ENCODE measurements at regions of chr4 and their contacts with region 1.

Region 1: DNA sequence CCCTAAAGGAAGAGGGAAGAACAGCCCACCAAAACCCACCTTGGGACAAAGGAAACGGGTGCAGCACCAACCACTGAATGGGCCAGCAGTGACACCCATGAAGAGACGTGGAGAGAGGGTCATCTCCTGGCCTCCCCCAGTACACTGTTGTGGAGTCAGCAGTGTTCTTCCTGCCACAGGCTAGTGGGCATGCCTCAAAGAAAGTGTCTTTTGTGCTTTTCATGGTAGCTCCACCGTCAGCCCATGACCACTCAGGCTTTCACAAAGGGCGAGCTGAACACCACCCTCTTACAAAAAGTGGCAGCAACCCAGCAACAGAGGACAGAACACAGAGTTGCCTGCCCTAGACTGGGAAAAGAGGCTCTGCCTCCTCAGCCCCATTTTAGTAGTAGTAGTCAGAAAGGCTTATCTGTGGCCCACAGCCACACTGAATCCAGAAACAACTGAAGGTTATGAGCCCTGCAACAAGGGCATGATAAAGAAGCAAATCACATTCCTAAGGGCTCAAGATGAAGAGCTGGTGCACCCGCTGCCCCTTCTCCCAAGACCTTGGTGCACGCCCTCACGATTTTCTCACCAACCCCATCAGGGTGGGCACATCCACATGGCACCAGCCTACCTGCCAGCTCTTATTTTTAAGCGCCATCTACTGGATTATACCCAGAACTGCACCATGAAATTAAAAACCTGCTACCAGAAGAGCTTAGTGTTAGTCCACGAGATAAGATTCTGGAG is 53.1 kb downstream of the RAB28 start:
- DNase-seq: no peak
- H3K4me3 Mint-ChIP-seq: no peak overlapping the region
- H3K27ac Mint-ChIP-seq: no peak overlapping the region
- H3K4me1 Mint-ChIP-seq: peaks cover 9% of the 10 kb centered on the region
- H3K27me3 Mint-ChIP-seq: no peaks in the 10 kb centered on the region

Region 2: GRCh38 chr4:13452927-13453579 is 22.1 kb after region 1 on chr4:
- intact Hi-C with region 1: loop called (anchors 2 kb)
- DNase-seq: no peak
- H3K4me3 Mint-ChIP-seq: peak overlapping the region; percentile 59
- H3K27ac Mint-ChIP-seq: peak overlapping the region; percentile 80
- H3K4me1 Mint-ChIP-seq: peaks cover 17% of the 10 kb centered on the region
- H3K27me3 Mint-ChIP-seq: no peaks in the 10 kb centered on the region

Measured in activated CD4-positive, alpha-beta T cell treated with anti-CD3 and anti-CD28 coated beads, Interleukin-2, amount 10 ng/mL, durations not matched to agents 24 days and 14 days (primary cell).